ENCODE measurements at regions of chr11 and their contacts with region 1.

Region 1: DNA sequence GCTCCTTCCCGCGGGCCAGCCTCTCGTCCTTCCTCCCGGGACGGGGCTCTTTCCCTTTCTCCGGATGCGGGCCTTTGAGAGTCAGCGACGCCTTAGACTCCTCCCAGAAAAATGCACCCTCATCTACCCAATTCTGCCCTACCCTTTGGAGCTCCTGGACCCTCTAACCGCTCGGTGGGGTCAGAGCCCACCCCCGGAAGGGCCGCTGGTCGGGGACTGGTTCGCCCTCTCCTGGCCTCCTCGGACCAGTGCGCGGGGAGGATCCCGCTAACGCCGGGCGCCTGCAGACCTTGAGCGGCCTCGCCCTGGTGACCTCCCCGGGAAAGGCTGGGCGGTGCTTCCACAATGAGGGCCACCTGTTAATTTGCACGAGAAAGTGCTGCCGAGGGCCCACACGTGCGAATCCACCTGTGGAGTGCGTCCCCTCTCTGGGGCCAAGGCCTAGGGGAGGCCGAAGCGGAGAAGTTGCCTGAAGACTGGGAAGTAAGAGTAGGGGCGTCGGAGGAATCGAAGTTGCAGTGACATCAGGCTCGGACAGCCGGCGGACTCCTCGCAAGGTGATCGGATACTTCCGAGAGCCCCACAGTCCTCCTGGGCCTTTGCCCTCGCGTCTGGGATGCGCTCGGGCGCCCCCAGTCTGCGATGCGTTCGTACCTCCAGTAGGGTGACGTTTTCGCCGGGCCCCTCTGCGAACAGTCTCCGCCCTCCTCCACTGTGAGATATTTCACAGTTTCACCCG is 61.5 kb downstream of the ENDOD1 start:
- DNase-seq: peak; percentile 87 to 92
- ATAC-seq: peak; percentile 84 to 89 (median 88)
- H3K4me3 ChIP-seq: peak overlapping the region; percentile 74
- H3K27ac ChIP-seq: peak overlapping the region; percentile 83
- H3K4me1 ChIP-seq: peaks cover 30% of the 10 kb centered on the region
- H3K27me3 ChIP-seq: no peaks in the 10 kb centered on the region
- CTCF ChIP-seq: peak; percentile 82

Region 2: DNA sequence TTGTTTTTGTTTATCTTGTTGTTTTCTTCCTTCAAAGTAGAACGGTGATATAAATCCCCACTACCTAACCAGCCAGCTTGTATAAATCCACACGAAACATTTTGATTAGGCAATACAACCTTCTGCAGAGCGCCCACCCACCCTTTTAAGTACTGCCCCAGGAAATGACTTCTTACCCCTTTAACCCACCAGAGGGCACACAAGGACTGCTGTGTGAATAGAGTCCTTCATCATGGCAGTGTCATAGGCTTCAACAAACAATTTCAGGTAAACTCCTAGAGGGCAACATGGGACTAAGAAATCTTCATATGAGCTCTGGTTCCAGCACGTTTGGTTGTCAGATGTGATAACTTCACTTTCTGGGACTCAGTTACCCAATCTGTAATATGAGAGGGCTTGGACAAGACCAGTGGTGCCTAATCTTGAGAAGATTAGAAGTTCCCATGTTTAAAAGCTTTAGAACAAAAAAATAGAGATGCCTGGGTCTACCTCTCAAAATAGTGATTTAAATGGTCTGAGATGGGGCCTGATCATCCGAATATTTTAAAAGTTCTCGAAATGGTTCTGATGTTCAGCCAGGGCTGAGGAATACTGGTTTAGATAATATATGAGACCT is 527.9 kb before region 1 on chr11:
- intact Hi-C with region 1: loop called in 1 of 2 experiments (anchors 10 kb)
- DNase-seq: no peak
- ATAC-seq: peak; percentile 96 to 98 (median 98)
- H3K4me3 ChIP-seq: no peak overlapping the region
- H3K27ac ChIP-seq: no peak overlapping the region
- H3K4me1 ChIP-seq: no peaks in the 10 kb centered on the region
- H3K27me3 ChIP-seq: no peaks in the 10 kb centered on the region
- CTCF ChIP-seq: peak; percentile 88

Region 3: DNA sequence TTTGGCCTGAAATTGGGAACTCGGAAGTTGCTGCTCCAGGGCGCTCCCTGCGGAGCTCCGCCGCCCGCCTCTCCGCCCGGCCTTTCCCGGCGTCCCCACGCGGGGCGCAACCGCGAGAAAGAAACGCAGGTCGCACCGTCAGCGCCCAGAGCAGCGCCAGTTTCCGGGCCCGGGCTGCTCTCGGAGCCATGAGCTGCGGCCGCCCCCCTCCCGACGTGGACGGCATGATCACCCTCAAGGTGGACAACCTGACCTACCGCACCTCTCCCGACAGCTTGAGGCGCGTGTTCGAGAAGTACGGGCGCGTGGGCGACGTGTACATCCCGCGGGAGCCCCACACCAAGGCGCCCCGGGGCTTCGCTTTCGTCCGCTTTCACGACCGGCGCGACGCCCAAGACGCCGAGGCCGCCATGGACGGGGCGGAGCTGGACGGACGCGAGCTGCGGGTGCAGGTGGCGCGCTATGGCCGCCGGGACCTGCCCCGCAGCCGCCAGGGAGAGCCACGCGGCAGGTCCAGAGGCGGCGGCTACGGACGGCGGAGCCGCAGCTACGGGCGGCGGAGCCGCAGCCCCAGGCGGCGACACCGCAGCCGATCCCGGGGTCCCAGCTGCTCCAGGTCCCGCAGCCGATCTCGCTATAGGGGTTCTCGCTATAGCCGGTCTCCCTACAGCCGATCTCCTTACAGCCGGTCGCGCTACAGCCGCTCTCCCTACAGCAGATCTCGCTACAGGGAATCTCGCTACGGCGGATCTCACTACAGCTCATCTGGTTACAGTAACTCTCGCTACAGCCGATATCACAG is 83.9 kb before region 1 on chr11:
- intact Hi-C with region 1: loop called (anchors 1 to 5 kb)
- DNase-seq: peak; percentile 90 to 94
- ATAC-seq: peak; percentile 81 to 87 (median 84)
- H3K4me3 ChIP-seq: peak overlapping the region; percentile 84
- H3K27ac ChIP-seq: peak overlapping the region; percentile 93
- H3K4me1 ChIP-seq: peaks cover 12% of the 10 kb centered on the region
- H3K27me3 ChIP-seq: no peaks in the 10 kb centered on the region
- CTCF ChIP-seq: peak; percentile 66

Region 4: GRCh38 chr11:95231127-95231880 is 80.2 kb after region 1 on chr11 and contains the start of gene SESN3:
- intact Hi-C with region 1: loop called in 1 of 2 experiments (anchors 5 kb)
- DNase-seq: peak; percentile 99
- ATAC-seq: peak; percentile 97 to 98 (median 98)
- H3K4me3 ChIP-seq: peak within 1 kb of the TSS; percentile 83
- H3K27ac ChIP-seq: peak within 1 kb of the TSS; percentile 62
- H3K4me1 ChIP-seq: peaks cover 8% of the 10 kb centered on the region
- H3K27me3 ChIP-seq: no peaks in the 10 kb centered on the region
- CTCF ChIP-seq: no peak
- total RNA-seq, gene SESN3: 5.3 to 94.6 (median 15.6) TPM

Region 5: GRCh38 chr11:95337175-95337957 is 186.3 kb after region 1 on chr11:
- intact Hi-C with region 1: loop called in 1 of 2 experiments (anchors 10 kb)
- DNase-seq: peak; percentile 69 to 79
- ATAC-seq: peak; percentile 57 to 84 (median 77)
- H3K4me3 ChIP-seq: peak overlapping the region; percentile 17
- H3K27ac ChIP-seq: peak overlapping the region; percentile 76
- H3K4me1 ChIP-seq: peaks cover 27% of the 10 kb centered on the region
- H3K27me3 ChIP-seq: no peaks in the 10 kb centered on the region
- CTCF ChIP-seq: no peak

Region 6: GRCh38 chr11:95705485-95706124 is 554.5 kb after region 1 on chr11:
- intact Hi-C with region 1: loop called (anchors 1 to 2 kb)
- DNase-seq: peak; percentile 77 to 88
- ATAC-seq: peak; percentile 93 to 99 (median 98)
- H3K4me3 ChIP-seq: no peak overlapping the region
- H3K27ac ChIP-seq: no peak overlapping the region
- H3K4me1 ChIP-seq: peaks cover 2% of the 10 kb centered on the region
- H3K27me3 ChIP-seq: no peaks in the 10 kb centered on the region
- CTCF ChIP-seq: peak; percentile 95

Region 7: GRCh38 chr11:95764267-95764898 is 613.3 kb after region 1 on chr11:
- intact Hi-C with region 1: loop called (anchors 1 to 5 kb)
- DNase-seq: no peak
- ATAC-seq: peak in 3 of 4 donors; percentile 42 to 72 (median 51)
- H3K4me3 ChIP-seq: no peak overlapping the region
- H3K27ac ChIP-seq: no peak overlapping the region
- H3K4me1 ChIP-seq: no peaks in the 10 kb centered on the region
- H3K27me3 ChIP-seq: peaks cover 0 to 2% (median 0%) of the 10 kb centered on the region in 3 donors
- CTCF ChIP-seq: peak; percentile 69